ENCODE measurements at regions of chr6 and their contacts with region 1.

Region 1: GRCh38 chr6:120764318-120764717 is 570.0 kb downstream of the TBC1D32 start:
- DNase-seq: no peak
- H3K4me3 ChIP-seq: no peak overlapping the region
- H3K27ac ChIP-seq: no peak overlapping the region
- H3K4me1 ChIP-seq: no peaks in the 10 kb centered on the region
- H3K27me3 ChIP-seq: no peaks in the 10 kb centered on the region
- CTCF ChIP-seq: no peak
- POLR2A ChIP-seq: no peak

Region 2: DNA sequence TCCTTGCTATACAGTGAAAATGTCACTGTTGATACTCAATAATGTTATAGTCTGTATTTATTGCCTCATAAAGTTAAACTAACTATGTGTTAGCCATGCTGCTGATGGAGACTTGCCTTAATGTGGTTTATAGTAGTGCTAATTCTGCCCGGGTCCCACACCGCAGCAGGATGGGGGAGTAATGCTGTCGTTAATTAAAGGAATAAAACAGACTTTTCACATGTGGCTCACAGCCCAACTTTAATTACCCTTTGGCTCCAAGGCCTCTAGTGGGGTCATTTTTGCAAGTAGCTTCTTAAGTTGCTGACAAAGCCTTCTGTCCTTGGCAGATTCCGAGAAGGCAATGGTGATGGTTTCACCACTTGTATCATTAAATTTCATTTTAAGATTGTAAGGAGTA is 64.3 kb before region 1 on chr6:
- intact Hi-C with region 1: loop called (anchors 5 kb)
- DNase-seq: no peak
- H3K4me3 ChIP-seq: no peak overlapping the region
- H3K27ac ChIP-seq: no peak overlapping the region
- H3K4me1 ChIP-seq: no peaks in the 10 kb centered on the region
- H3K27me3 ChIP-seq: no peaks in the 10 kb centered on the region
- CTCF ChIP-seq: no peak
- POLR2A ChIP-seq: no peak

Region 3: GRCh38 chr6:120894077-120894476 is 129.8 kb after region 1 on chr6:
- intact Hi-C with region 1: no loop called
- DNase-seq: no peak
- H3K4me3 ChIP-seq: no peak overlapping the region
- H3K27ac ChIP-seq: no peak overlapping the region
- H3K4me1 ChIP-seq: no peaks in the 10 kb centered on the region
- H3K27me3 ChIP-seq: no peaks in the 10 kb centered on the region
- CTCF ChIP-seq: no peak
- POLR2A ChIP-seq: no peak